ENCODE measurements at regions of chr17 and their contacts with region 1.

Region 1: DNA sequence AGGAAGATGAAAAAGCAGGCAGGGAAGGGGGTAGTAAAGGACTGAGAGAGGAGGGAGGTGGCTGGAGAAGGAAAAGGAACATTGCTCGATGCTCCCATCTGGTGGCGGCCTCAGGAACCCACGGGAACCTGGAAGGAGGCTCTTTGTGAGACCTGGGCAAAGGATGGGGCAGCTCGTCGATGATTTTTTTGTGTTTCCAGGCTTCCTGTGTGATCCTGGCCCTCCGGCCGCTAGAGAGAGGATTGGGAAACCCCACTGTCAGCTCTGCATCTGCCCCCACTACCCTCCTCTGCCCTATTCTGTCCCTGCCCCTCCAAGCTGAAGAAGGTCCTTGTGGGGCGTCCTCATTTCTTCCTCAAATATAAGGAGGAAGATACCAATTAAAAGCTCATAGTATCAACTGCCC is 6.6 kb downstream of the WFIKKN2 start:
- DNase-seq: peak; percentile 58
- ATAC-seq: peak; percentile 85
- H3K4me3 ChIP-seq: no peak overlapping the region
- H3K27ac ChIP-seq: no peak overlapping the region
- H3K4me1 ChIP-seq: peaks cover 6% of the 10 kb centered on the region; the same call in 1 of the 2 replicates
- H3K27me3 ChIP-seq: peaks cover 3% of the 10 kb centered on the region; the same call in 1 of the 2 replicates
- CTCF ChIP-seq: peak; percentile 88
- POLR2A ChIP-seq: no peak
- RAD21 ChIP-seq: peak; percentile 84

Region 2: DNA sequence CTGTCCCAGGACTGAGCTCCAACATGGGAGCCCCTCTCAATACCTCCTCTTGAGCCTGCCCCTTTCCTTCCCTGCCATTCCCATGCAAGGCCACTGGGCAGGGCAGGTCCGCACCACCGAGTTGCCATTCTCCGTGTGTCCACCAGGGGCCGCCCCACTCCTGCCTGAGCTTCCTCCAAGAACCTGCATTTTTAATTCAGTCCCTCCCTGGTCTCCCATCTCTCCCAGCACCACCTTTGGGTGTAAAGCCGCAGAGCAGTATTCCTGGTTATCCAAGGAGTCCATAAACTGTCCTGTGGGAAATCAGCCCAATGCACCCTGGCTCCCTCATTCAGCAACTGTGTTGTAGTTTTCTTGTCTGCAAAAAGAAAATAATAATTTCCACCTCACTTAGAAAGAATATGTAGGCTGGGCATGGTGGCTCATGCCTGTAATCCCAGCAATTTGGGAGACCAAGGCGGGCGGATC is 58.7 kb before region 1 on chr17:
- CTCF ChIA-PET with region 1: interaction called, 8 read pairs
- POLR2A ChIA-PET with region 1: no interaction called
- dilution Hi-C with region 1: no loop called
- in situ Hi-C with region 1: loop called (anchors 5 kb)
- intact Hi-C with region 1: loop called (anchors 1 kb)
- DNase-seq: peak; percentile 85
- ATAC-seq: peak; percentile 96
- H3K4me3 ChIP-seq: no peak overlapping the region
- H3K27ac ChIP-seq: no peak overlapping the region
- H3K4me1 ChIP-seq: peaks cover 12% of the 10 kb centered on the region
- H3K27me3 ChIP-seq: peaks cover 2% of the 10 kb centered on the region
- CTCF ChIP-seq: peak; percentile 99
- POLR2A ChIP-seq: 0 out of 2 replicates have a peak, but pooled peaks have one; percentile 36
- RAD21 ChIP-seq: peak; percentile 99

Region 3: DNA sequence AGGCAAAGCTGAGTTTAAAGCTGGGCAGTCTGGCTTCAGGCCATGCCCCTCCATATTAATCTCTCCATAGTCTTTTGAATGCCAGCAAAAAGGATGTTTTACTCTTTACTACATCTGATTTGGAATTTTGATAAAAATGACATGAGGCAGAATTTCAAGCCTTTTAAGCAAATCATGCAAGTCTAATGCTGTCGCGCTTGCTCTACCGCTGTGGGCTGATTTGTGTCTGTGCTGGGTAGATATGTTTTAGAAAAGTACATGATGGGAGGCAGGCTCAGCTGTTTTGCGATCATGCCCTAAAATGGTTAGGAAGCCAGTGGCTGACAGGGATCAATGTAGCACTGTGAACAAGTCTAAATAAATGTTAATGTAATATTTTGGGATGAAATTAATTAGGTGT is 1004.6 kb after region 1 on chr17:
- CTCF ChIA-PET with region 1: no interaction called
- POLR2A ChIA-PET with region 1: no interaction called
- dilution Hi-C with region 1: no loop called
- in situ Hi-C with region 1: no loop called
- intact Hi-C with region 1: no loop called
- DNase-seq: no peak
- ATAC-seq: no peak
- H3K4me3 ChIP-seq: no peak overlapping the region
- H3K27ac ChIP-seq: no peak overlapping the region
- H3K4me1 ChIP-seq: no peaks in the 10 kb centered on the region
- H3K27me3 ChIP-seq: no peaks in the 10 kb centered on the region
- CTCF ChIP-seq: no peak
- POLR2A ChIP-seq: no peak
- RAD21 ChIP-seq: no peak